ENCODE measurements at regions of chr19 and their contacts with region 1.

Region 1: DNA sequence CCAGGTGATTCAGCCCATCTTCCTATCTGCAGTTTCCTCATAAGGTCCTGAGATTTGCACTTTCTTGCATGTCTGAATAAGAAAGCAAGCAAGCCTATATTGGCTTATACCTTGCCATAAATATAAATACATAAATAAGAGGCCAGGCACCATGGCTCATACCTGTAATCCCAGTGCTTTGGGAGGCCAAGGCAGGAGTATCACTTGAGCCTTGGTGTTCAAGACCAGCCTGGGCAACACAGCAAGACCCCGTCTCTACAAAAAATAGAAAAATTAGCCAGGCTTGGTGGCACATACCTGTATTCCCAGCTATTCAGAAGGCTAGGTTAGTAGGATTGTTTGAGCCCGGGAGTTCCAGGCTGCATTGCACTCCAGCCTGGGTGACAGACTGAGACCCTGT is 5.5 kb upstream of the GPATCH1 start:
- DNase-seq: no peak
- H3K4me3 Mint-ChIP-seq: no peak overlapping the region
- H3K27ac Mint-ChIP-seq: no peak overlapping the region
- H3K4me1 Mint-ChIP-seq: peaks cover 17% of the 10 kb centered on the region
- H3K27me3 Mint-ChIP-seq: no peaks in the 10 kb centered on the region
- CTCF ChIP-seq: no peak

Region 2: GRCh38 chr19:33110137-33110910 is 34.8 kb after region 1 on chr19:
- CTCF ChIA-PET with region 1: no interaction called
- intact Hi-C with region 1: loop called (anchors 5 kb)
- DNase-seq: no peak
- H3K4me3 Mint-ChIP-seq: no peak overlapping the region
- H3K27ac Mint-ChIP-seq: no peak overlapping the region
- H3K4me1 Mint-ChIP-seq: peaks cover 22% of the 10 kb centered on the region
- H3K27me3 Mint-ChIP-seq: no peaks in the 10 kb centered on the region
- CTCF ChIP-seq: no peak